Psoas muscle (tissue), 8 donors: ENCODE measurements at regions of chr18 and their contacts with region 1.

Region 1: GRCh38 chr18:52489396-52490306 is 149.7 kb downstream of the DCC start:
- DNase-seq: no peak
- ATAC-seq: no peak
- H3K4me3 ChIP-seq: no peak overlapping the region
- H3K27ac ChIP-seq: no peak overlapping the region
- H3K4me1 ChIP-seq: no peaks in the 10 kb centered on the region
- H3K27me3 ChIP-seq: no peaks in the 10 kb centered on the region
- CTCF ChIP-seq: no peak

Region 2: GRCh38 chr18:52254367-52254766 is 235.3 kb before region 1 on chr18:
- intact Hi-C with region 1: no loop called
- DNase-seq: no peak
- ATAC-seq: no peak
- H3K4me3 ChIP-seq: no peak overlapping the region
- H3K27ac ChIP-seq: no peak overlapping the region
- H3K4me1 ChIP-seq: no peaks in the 10 kb centered on the region
- H3K27me3 ChIP-seq: no peaks in the 10 kb centered on the region
- CTCF ChIP-seq: no peak

Region 3: DNA sequence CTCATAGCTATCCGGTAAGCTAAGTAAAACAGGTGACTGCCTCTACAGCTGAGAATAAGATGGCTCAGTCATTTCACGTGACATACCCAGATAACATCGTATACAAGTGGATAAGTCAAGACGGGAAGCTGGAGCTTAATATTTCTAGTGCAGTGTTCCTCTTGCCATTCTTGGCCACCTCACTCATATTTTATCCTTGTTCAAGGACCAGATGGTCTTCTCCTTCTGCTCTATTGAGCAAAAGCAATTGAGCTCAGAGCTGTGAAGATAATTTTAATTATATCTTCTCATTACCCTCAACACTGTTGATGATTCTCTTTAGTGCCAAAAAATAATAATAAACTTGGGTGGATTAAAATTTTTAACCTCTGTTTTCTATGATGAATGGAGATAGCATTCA is 51.4 kb after region 1 on chr18:
- intact Hi-C with region 1: loop called in 1 of 2 experiments (anchors 5 kb)
- DNase-seq: no peak
- ATAC-seq: no peak
- H3K4me3 ChIP-seq: no peak overlapping the region
- H3K27ac ChIP-seq: no peak overlapping the region
- H3K4me1 ChIP-seq: no peaks in the 10 kb centered on the region
- H3K27me3 ChIP-seq: no peaks in the 10 kb centered on the region
- CTCF ChIP-seq: no peak